ENCODE measurements at regions of chr2 and their contacts with region 1.

Region 1: DNA sequence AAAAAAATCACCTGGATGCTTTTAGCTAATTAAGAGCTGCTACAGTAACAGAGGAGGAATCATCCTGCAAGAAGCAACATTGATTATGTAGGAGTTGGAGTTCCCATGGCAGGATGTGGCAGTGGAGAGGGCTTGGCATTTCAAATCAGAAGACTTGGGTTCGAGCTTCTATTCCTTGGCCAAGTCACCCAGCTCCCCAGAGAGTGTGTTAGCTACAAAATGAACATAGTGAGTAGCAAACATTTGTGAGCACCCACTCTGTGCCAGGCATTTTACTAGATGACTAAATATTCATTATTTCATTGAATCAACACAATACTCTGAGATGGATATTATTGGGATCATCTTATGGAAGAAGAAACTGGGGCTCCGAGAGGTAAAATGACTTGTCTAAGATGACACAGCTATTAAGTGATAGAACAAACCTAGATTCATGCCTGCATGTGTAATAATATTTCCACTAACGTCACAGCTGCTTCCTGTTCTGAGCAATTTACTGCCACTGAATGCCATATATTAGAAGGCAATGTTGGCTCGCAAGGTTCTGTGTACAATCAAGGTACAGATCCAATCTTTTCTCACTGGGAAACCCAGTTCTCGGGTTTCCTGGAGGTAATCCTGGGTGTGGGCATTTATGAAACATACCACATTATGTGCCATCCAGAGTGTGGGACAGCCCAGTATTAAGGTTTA is 18.0 kb downstream of the NTSR2 start:
- DNase-seq: no peak
- ATAC-seq: no peak
- H3K4me3 ChIP-seq: no peak overlapping the region
- H3K27ac ChIP-seq: no peak overlapping the region
- H3K4me1 ChIP-seq: no peaks in the 10 kb centered on the region
- H3K27me3 ChIP-seq: peaks cover 6% of the 10 kb centered on the region; the same call in 1 of the 2 replicates
- CTCF ChIP-seq: no peak

Region 2: GRCh38 chr2:11624893-11625292 is 27.1 kb before region 1 on chr2:
- CTCF ChIA-PET with region 1: no interaction called
- POLR2A ChIA-PET with region 1: interaction called, 10 read pairs
- in situ Hi-C with region 1: no loop called
- intact Hi-C with region 1: no loop called
- DNase-seq: no peak
- ATAC-seq: no peak
- H3K4me3 ChIP-seq: no peak overlapping the region
- H3K27ac ChIP-seq: no peak overlapping the region
- H3K4me1 ChIP-seq: no peaks in the 10 kb centered on the region
- H3K27me3 ChIP-seq: no peaks in the 10 kb centered on the region
- CTCF ChIP-seq: no peak

Region 3: GRCh38 chr2:11980809-11981208 is 328.8 kb after region 1 on chr2:
- CTCF ChIA-PET with region 1: no interaction called
- POLR2A ChIA-PET with region 1: no interaction called
- in situ Hi-C with region 1: no loop called
- intact Hi-C with region 1: no loop called
- DNase-seq: no peak
- ATAC-seq: no peak
- H3K4me3 ChIP-seq: no peak overlapping the region
- H3K27ac ChIP-seq: no peak overlapping the region
- H3K4me1 ChIP-seq: no peaks in the 10 kb centered on the region
- H3K27me3 ChIP-seq: no peaks in the 10 kb centered on the region
- CTCF ChIP-seq: no peak

Measured in Panc1 (cell line).